GM10248 (cell line): ENCODE measurements at regions of chr20 and their contacts with region 1.

Region 1: GRCh38 chr20:47453142-47453782 is 48.4 kb upstream of the NCOA3 start:
- DNase-seq: peak; percentile 78
- CTCF ChIP-seq: no peak

Region 2: GRCh38 chr20:46978951-46979491 is 474.2 kb before region 1 on chr20:
- CTCF ChIA-PET with region 1: no interaction called
- POLR2A ChIA-PET with region 1: no interaction called
- DNase-seq: no peak
- CTCF ChIP-seq: no peak

Region 3: DNA sequence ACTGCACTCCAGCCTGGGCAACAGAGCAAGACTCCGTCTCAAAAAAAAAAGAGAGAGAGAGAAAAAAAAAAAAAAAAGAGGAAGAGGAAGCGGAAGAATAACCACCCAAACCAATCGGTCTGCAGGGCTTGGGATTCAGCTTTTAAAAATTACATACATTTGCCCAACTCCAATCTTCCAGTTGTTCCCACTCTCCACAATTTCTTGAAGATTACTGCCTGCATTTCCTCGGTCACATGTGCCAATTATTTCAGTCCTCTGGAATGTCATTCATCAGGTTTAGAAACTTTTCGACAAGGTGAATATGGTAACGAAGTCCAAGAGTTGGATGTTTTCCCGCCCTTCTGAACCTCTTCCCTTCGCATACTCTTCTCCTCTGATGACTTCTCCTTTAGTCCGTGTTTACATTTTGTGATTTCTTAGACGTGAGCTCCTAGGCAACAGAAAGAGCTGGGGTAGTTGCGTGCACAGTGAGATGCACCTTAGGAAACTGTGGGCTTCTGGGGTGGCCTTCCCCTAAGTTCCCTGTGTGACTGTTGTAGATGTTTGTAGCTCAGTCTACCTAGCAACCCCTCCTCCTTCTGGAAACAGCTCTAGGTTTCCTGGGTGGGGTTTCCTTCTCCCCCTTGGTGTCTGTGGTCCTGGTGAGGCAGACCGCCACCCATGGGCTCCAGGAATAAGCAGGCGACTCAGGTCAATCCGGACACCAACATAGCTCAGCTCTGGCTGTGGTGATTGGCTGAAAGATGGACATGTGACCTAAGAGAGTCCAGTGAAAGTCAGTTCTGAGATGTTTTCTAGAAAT is 14.5 kb before region 1 on chr20:
- CTCF ChIA-PET with region 1: interaction called, 7 read pairs
- POLR2A ChIA-PET with region 1: interaction called, 13 read pairs
- DNase-seq: peak; percentile 71
- CTCF ChIP-seq: no peak

Region 4: GRCh38 chr20:47468290-47469050 is 15.2 kb after region 1 on chr20:
- CTCF ChIA-PET with region 1: interaction called, 12 read pairs
- POLR2A ChIA-PET with region 1: interaction called, 3 read pairs
- DNase-seq: peak; percentile 47
- CTCF ChIP-seq: no peak

Region 5: DNA sequence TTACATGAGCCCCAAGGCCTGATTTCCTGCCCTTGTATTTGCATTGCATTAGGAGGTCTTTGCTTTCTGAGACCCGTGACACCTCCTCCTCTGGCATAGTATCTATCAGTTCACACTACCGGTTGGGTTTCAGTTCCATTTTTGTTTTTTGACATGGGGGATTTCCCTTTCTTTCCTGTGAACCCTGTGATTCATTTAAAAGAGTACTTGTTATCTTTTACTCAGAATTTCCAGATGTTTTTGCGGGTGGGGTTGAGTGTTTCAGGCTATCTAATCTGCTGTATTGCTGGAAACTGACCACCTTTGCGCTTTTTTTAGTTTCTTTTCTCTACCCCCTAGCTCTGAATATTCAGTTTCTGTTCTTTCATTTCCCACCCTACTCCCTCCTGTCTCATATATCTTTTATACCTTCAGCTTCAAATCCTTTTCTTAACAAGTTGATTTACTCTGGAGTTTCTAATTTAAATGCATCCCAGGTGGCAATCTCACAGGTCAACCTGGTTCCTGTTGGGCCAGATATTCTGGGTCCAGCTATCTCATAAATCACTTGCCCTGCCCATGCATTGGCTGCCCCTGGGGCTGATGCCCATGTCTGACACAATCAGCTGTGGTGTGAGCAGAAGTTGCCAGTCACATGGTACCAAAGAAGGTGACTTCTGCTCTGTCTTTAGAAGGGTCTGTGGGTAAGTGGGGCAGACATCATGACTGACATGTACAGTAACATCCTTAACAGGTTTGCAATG is 34.1 kb after region 1 on chr20:
- CTCF ChIA-PET with region 1: interaction called, 11 read pairs
- POLR2A ChIA-PET with region 1: no interaction called
- DNase-seq: peak; percentile 72
- CTCF ChIP-seq: no peak

Region 6: GRCh38 chr20:47540443-47541354 is 87.4 kb after region 1 on chr20:
- CTCF ChIA-PET with region 1: no interaction called
- POLR2A ChIA-PET with region 1: no interaction called
- DNase-seq: peak; percentile 46
- CTCF ChIP-seq: no peak